Naive thymus-derived CD8-positive, alpha-beta T cell (primary cell): ENCODE measurements at regions of chr5 and their contacts with region 1.

Region 1: DNA sequence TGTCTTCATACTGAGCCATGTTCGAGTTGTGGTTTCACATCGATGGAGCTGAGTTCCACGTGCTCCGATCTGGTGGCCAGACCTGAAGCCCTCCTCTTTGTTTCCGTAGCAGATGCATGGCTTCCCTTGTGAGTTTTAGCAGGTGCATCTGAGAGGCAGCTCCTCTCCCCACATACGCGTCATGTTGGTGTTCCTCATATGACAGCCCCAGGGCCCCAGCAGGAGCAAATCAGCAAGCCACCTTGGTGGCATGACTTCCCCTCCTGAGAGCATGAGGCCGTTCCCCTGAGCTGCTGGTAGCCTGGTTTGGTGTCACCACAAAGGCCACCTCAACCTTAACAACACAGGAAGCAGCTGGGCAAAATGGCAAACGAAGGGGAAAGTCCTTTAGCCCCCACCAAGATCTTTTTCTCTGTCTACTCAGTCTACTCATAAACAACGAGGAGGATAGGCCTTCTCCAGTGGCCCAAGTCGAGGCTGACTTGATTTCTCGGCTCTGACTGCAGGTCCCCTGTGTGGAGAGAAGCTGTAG is 5.9 kb downstream of the CYFIP2 start:
- DNase-seq: peak; percentile 59 to 96 (median 92)
- ATAC-seq: peak; percentile 88 to 94
- H3K4me3 Mint-ChIP-seq: peak overlapping the region; percentile 76 to 96 (median 86)
- H3K27ac Mint-ChIP-seq: peak overlapping the region; percentile 93 to 100 (median 98)
- H3K4me1 Mint-ChIP-seq: peaks cover 48 to 96% (median 89%) of the 10 kb centered on the region in 4 donors
- H3K27me3 Mint-ChIP-seq: peaks cover 0 to 1% (median 0%) of the 10 kb centered on the region in 5 donors

Region 2: DNA sequence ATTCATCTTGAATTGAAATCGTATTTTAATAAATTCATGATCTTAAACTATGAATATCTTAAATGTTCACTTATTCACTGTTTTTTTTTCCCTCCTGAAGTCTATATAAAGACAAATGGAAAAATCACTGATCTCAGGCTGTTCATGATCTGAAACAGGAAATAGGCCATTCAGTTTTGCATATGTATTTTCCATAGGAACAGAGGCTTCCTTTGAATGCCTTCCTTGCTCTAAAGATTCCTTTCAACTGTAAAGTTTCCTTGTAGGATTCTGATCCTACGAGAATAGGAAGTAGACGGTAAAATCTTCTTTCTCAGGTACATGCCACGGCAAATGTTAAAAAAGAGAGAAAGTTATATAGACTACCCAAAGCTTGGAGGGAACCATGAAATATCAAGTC is 616.1 kb before region 1 on chr5:
- POLR2A ChIA-PET with region 1: no interaction called
- DNase-seq: no peak
- ATAC-seq: no peak
- H3K4me3 Mint-ChIP-seq: no peak overlapping the region
- H3K27ac Mint-ChIP-seq: no peak overlapping the region
- H3K4me1 Mint-ChIP-seq: no peaks in the 10 kb centered on the region
- H3K27me3 Mint-ChIP-seq: peaks cover 2 to 16% (median 9%) of the 10 kb centered on the region in 5 donors

Region 3: DNA sequence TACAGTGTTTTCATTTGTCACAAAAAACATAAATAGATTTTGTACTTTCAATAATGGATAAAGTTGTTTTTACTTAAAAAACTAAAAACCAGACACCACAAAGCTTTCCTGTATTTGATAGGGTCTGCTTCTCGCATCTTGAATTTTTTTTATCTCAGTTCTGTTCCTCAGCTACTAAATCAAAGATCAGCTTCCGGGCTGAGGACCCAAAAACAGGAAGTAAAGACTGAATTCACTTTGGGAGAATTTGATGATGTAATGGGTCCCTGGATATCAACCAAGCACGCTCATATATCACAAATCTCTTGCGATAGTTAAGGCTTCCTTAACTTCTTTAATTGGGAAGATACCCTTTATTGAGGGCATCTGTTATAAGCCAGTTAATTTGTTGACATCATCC is 67.0 kb before region 1 on chr5:
- POLR2A ChIA-PET with region 1: interaction called, 10 read pairs
- DNase-seq: peak in 4 of 10 donors; percentile 41 to 74 (median 58)
- ATAC-seq: peak; percentile 61 to 76
- H3K4me3 Mint-ChIP-seq: peak overlapping the region; percentile 62 to 82 (median 68)
- H3K27ac Mint-ChIP-seq: peak overlapping the region; percentile 86 to 98 (median 93)
- H3K4me1 Mint-ChIP-seq: peaks cover 37 to 92% (median 83%) of the 10 kb centered on the region in 4 donors
- H3K27me3 Mint-ChIP-seq: no peaks in the 10 kb centered on the region

Region 4: DNA sequence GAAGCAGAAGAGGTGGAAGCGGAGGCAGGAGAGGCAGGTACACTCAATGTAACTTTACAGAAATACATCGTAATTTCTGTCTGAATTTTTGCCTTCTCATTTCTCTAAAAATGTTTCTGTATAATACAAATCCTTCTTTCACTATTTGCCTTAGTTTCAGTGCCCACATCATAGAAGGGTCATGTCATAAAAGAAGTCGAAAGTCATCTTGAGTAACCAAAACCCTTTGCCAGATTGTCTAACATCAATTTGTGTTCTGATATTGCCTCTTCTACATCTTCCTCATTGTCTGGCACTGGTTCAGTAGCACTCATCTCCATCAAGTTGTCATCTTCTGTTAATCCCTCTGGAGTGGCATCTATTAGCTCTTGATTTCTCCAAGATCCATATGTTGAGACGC is 12.1 kb before region 1 on chr5:
- POLR2A ChIA-PET with region 1: interaction called, 46 read pairs
- DNase-seq: no peak
- ATAC-seq: no peak
- H3K4me3 Mint-ChIP-seq: peak overlapping the region in 3 of 10 donors; percentile 16 to 30 (median 26)
- H3K27ac Mint-ChIP-seq: peak overlapping the region in 9 of 10 donors; percentile 6 to 92 (median 52)
- H3K4me1 Mint-ChIP-seq: peaks cover 50 to 86% (median 80%) of the 10 kb centered on the region in 4 donors
- H3K27me3 Mint-ChIP-seq: no peaks in the 10 kb centered on the region

Region 5: DNA sequence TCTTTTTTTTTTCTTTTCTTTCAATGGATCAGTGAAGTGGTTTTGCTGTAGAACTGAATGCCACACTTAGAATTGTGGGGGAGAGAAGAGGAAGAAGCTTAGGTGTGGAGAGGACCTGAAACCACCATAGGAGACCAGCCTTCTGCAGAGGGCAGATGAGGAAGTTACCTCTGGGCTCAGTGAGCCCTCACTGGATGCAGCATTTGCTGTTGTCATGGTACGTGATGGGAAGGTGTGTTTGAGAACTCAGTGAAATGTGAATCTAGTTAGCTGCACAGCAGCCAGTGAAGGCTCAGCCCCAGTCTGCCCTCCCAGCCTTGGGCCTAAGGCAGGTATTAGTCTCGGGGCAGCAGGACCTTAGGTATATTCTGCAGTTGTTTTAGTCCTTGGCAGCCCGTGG is 11.6 kb after region 1 on chr5:
- POLR2A ChIA-PET with region 1: interaction called, 88 read pairs
- DNase-seq: peak in 4 of 10 donors; percentile 38 to 53 (median 40)
- ATAC-seq: peak; percentile 90 to 96
- H3K4me3 Mint-ChIP-seq: peak overlapping the region; percentile 1 to 67 (median 48)
- H3K27ac Mint-ChIP-seq: peak overlapping the region; percentile 58 to 93 (median 80)
- H3K4me1 Mint-ChIP-seq: peaks cover 38 to 89% (median 88%) of the 10 kb centered on the region in 4 donors
- H3K27me3 Mint-ChIP-seq: no peaks in the 10 kb centered on the region

Region 6: GRCh38 chr5:157308836-157309465 is 37.1 kb after region 1 on chr5:
- POLR2A ChIA-PET with region 1: interaction called, 76 read pairs
- DNase-seq: peak in 6 of 10 donors; percentile 27 to 69 (median 44)
- ATAC-seq: no peak
- H3K4me3 Mint-ChIP-seq: peak overlapping the region in 7 of 10 donors; percentile 22 to 68 (median 38)
- H3K27ac Mint-ChIP-seq: peak overlapping the region; percentile 86 to 98 (median 94)
- H3K4me1 Mint-ChIP-seq: peaks cover 34 to 83% (median 82%) of the 10 kb centered on the region in 4 donors
- H3K27me3 Mint-ChIP-seq: no peaks in the 10 kb centered on the region